ENCODE measurements at regions of chr6 and their contacts with region 1.

Region 1: GRCh38 chr6:129498950-129499842 is 210.8 kb downstream of the ARHGAP18 start:
- DNase-seq: peak in 3 of 9 experiments; percentile 22 to 76 (median 67)
- ATAC-seq: peak; percentile 68
- H3K4me3 ChIP-seq: no peak overlapping the region
- H3K4me3 Mint-ChIP-seq: peak overlapping the region; percentile 53
- H3K27ac ChIP-seq: no peak overlapping the region
- H3K27ac Mint-ChIP-seq: no peak overlapping the region
- H3K4me1 ChIP-seq: peaks cover 4% of the 10 kb centered on the region
- H3K4me1 Mint-ChIP-seq: peaks cover 9% of the 10 kb centered on the region
- H3K27me3 ChIP-seq: no peaks in the 10 kb centered on the region
- H3K27me3 Mint-ChIP-seq: no peaks in the 10 kb centered on the region
- CTCF ChIP-seq: peak; percentile 69

Region 2: DNA sequence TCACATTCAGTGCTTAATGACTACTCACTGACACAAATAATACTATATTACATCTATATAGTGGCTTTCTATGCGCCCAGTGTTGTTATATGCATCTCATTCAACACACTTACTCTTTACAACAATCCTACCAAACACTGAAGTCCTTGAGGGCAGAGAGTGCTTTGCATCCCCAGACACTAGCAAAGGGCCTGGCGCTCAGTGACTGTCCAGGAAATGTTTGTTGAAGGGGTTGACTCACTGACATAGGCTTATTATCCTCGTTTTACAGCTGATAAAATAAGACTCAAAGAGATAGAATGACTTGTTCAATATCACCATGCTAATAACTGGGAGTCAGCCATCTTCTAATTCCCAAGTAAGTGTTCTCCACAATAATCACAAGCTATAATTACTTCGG is 47.5 kb after region 1 on chr6:
- CTCF ChIA-PET with region 1: no interaction called
- POLR2A ChIA-PET with region 1: no interaction called
- intact Hi-C with region 1: no loop called
- DNase-seq: no peak
- ATAC-seq: no peak
- H3K4me3 ChIP-seq: no peak overlapping the region
- H3K4me3 Mint-ChIP-seq: no peak overlapping the region
- H3K27ac ChIP-seq: no peak overlapping the region
- H3K27ac Mint-ChIP-seq: no peak overlapping the region
- H3K4me1 ChIP-seq: no peaks in the 10 kb centered on the region
- H3K4me1 Mint-ChIP-seq: no peaks in the 10 kb centered on the region
- H3K27me3 ChIP-seq: no peaks in the 10 kb centered on the region
- H3K27me3 Mint-ChIP-seq: no peaks in the 10 kb centered on the region
- CTCF ChIP-seq: no peak

Region 3: DNA sequence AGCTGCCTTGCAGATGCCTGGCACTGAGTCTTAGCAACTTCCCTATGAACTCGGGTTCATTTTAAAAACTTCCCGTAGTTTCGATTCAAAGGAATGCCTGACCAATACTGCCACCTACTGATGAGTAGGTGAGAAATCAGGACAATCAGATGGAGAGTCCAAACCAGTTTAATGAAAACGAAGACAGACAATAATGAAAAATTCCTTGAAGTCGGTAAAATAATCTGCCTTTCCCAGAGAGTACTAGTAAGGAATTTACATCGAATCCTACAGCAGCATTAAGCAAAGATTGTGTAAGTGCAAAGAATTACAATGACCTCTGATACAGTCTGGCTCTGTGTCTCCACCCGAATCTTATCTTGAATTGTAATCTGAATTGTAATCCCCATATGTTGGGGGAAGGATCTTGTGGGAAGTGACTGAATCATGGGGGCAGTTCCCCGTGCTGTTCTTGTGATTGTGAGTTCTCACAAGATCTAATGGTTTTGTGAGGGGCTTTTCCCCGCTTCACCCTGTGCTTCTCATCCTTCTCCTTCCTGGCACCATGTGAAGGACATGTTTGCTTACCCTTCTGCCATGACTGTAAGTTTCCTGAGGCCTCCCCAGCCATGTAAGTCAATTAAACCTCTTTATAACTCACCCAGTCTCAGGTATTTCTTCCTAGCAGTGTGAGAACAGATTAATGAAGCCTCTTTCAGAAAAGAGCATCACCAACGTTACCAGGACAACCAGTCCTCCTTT is 76.4 kb after region 1 on chr6:
- CTCF ChIA-PET with region 1: interaction called, 9 read pairs
- POLR2A ChIA-PET with region 1: no interaction called
- intact Hi-C with region 1: loop called (anchors 1 to 5 kb)
- DNase-seq: peak in 2 of 9 experiments; percentile 36 to 55
- ATAC-seq: peak; percentile 42
- H3K4me3 ChIP-seq: peak overlapping the region; percentile 12 to 26
- H3K4me3 Mint-ChIP-seq: peak overlapping the region; percentile 52
- H3K27ac ChIP-seq: no peak overlapping the region
- H3K27ac Mint-ChIP-seq: no peak overlapping the region
- H3K4me1 ChIP-seq: no peaks in the 10 kb centered on the region
- H3K4me1 Mint-ChIP-seq: peaks cover 5% of the 10 kb centered on the region
- H3K27me3 ChIP-seq: no peaks in the 10 kb centered on the region
- H3K27me3 Mint-ChIP-seq: no peaks in the 10 kb centered on the region
- CTCF ChIP-seq: peak; percentile 62

Region 4: DNA sequence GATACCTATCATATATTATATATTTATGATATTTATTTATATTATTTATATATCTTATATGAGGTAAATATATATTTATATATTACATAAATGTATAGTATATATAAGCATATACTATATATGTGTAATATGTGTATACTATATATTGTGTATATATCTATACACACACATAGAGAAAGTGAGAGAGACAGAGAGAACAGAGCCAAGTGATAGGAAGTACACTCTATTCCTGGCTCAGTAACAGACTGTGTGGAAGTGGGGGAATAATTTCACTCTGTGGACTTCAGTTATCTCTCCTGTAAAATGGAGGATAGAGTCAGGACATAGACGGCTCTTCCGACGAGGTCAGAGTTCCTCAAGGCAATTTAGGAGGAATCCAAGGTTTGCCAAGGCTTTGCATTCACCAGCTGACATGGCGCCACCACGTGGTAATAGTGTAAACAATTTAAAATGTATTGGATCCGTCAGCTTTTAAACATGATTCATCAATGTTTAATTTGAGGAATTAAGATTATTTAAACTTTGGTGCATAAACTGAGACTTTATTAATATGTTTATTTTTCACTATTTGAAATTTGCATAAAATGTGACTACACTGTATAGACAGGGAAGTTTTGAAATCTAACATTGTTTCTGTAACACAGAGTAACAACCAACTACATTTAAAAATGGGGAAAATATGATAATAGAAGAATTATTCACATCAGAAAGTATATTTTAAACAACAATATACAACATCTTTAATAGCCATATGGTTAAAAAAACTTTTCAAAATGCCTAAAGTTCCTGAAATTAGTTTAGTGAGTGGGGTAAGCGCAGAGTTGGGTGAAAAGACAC is 437.4 kb after region 1 on chr6:
- CTCF ChIA-PET with region 1: interaction called, 5 read pairs
- POLR2A ChIA-PET with region 1: no interaction called
- intact Hi-C with region 1: loop called (anchors 1 to 2 kb)
- DNase-seq: peak in 6 of 9 experiments; percentile 26 to 69 (median 45)
- ATAC-seq: peak; percentile 40
- H3K4me3 ChIP-seq: no peak overlapping the region
- H3K4me3 Mint-ChIP-seq: no peak overlapping the region
- H3K27ac ChIP-seq: no peak overlapping the region
- H3K27ac Mint-ChIP-seq: no peak overlapping the region
- H3K4me1 ChIP-seq: no peaks in the 10 kb centered on the region
- H3K4me1 Mint-ChIP-seq: peaks cover 2% of the 10 kb centered on the region
- H3K27me3 ChIP-seq: no peaks in the 10 kb centered on the region
- H3K27me3 Mint-ChIP-seq: peaks cover 10% of the 10 kb centered on the region
- CTCF ChIP-seq: peak; percentile 76

Region 5: GRCh38 chr6:130872250-130873095 is 1373.3 kb after region 1 on chr6:
- CTCF ChIA-PET with region 1: interaction called, 3 read pairs
- POLR2A ChIA-PET with region 1: no interaction called
- intact Hi-C with region 1: loop called (anchors 2 to 10 kb)
- DNase-seq: peak; percentile 42 to 79 (median 71)
- ATAC-seq: peak; percentile 56
- H3K4me3 ChIP-seq: no peak overlapping the region
- H3K4me3 Mint-ChIP-seq: no peak overlapping the region
- H3K27ac ChIP-seq: no peak overlapping the region
- H3K27ac Mint-ChIP-seq: no peak overlapping the region
- H3K4me1 ChIP-seq: no peaks in the 10 kb centered on the region
- H3K4me1 Mint-ChIP-seq: peaks cover 4% of the 10 kb centered on the region
- H3K27me3 ChIP-seq: no peaks in the 10 kb centered on the region
- H3K27me3 Mint-ChIP-seq: no peaks in the 10 kb centered on the region
- CTCF ChIP-seq: peak; percentile 98

Region 6: GRCh38 chr6:131063028-131063763 is 1564.0 kb after region 1 on chr6 and contains the start of gene EPB41L2:
- CTCF ChIA-PET with region 1: no interaction called
- POLR2A ChIA-PET with region 1: no interaction called
- intact Hi-C with region 1: loop called in 1 of 2 experiments (anchors 10 kb)
- DNase-seq: peak; percentile 55 to 92 (median 79)
- ATAC-seq: peak; percentile 91
- H3K4me3 ChIP-seq: peak within 1 kb of the TSS; percentile 57 to 80
- H3K4me3 Mint-ChIP-seq: peak within 1 kb of the TSS; percentile 89
- H3K27ac ChIP-seq: peak within 1 kb of the TSS in 1 of 2 experiments; percentile 49
- H3K27ac Mint-ChIP-seq: peak within 1 kb of the TSS; percentile 76
- H3K4me1 ChIP-seq: peaks cover 10% of the 10 kb centered on the region
- H3K4me1 Mint-ChIP-seq: peaks cover 27% of the 10 kb centered on the region
- H3K27me3 ChIP-seq: no peaks in the 10 kb centered on the region
- H3K27me3 Mint-ChIP-seq: no peaks in the 10 kb centered on the region
- CTCF ChIP-seq: peak; percentile 18
- total RNA-seq, gene EPB41L2: 11.0 to 12.0 TPM

Measured in CD8-positive, alpha-beta T cell (primary cell).